ENCODE measurements at regions of chr12 and their contacts with region 1.

Region 1: GRCh38 chr12:109998904-109999857 is at the start of gene ANKRD13A:
- DNase-seq: peak; percentile 94
- H3K4me3 Mint-ChIP-seq: peak within 1 kb of the TSS; percentile 82
- H3K27ac Mint-ChIP-seq: peak within 1 kb of the TSS; percentile 100
- H3K4me1 Mint-ChIP-seq: peaks cover 27% of the 10 kb centered on the region
- H3K27me3 Mint-ChIP-seq: no peaks in the 10 kb centered on the region
- CTCF ChIP-seq: no peak
- total RNA-seq, gene ANKRD13A: 26.1 and 32.5 TPM in 2 replicates

Region 2: DNA sequence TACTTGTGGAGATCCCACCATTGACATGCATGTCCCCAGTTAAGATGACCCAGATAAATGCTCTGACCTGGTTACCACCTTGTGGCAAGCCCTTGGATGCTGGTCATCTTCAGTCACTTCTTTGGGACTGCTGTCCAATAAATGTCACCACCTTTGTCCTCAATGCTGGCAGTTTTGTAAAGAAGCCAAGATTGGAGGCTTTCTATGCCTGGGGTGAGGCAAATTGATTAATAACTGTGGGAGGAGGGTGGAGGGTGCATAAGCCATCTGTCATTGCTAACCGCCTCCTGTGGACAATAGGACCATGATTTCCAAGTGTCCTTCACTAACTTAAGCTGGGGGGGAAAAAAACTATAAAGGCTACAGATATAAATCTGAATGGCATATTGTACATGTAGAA is 24.4 kb after region 1 on chr12:
- CTCF ChIA-PET with region 1: interaction called, 8 read pairs
- POLR2A ChIA-PET with region 1: interaction called, 5 read pairs
- intact Hi-C with region 1: loop called (anchors 2 kb)
- DNase-seq: no peak
- H3K4me3 Mint-ChIP-seq: no peak overlapping the region
- H3K27ac Mint-ChIP-seq: no peak overlapping the region
- H3K4me1 Mint-ChIP-seq: peaks cover 14% of the 10 kb centered on the region
- H3K27me3 Mint-ChIP-seq: no peaks in the 10 kb centered on the region
- CTCF ChIP-seq: no peak

Region 3: GRCh38 chr12:110039085-110039807 is 40.1 kb after region 1 on chr12:
- CTCF ChIA-PET with region 1: interaction called, 3 read pairs
- POLR2A ChIA-PET with region 1: interaction called, 11 read pairs
- intact Hi-C with region 1: loop called (anchors 5 kb)
- DNase-seq: peak; percentile 88
- H3K4me3 Mint-ChIP-seq: peak overlapping the region; percentile 79
- H3K27ac Mint-ChIP-seq: peak overlapping the region; percentile 100
- H3K4me1 Mint-ChIP-seq: peaks cover 18% of the 10 kb centered on the region
- H3K27me3 Mint-ChIP-seq: no peaks in the 10 kb centered on the region
- CTCF ChIP-seq: no peak

Region 4: DNA sequence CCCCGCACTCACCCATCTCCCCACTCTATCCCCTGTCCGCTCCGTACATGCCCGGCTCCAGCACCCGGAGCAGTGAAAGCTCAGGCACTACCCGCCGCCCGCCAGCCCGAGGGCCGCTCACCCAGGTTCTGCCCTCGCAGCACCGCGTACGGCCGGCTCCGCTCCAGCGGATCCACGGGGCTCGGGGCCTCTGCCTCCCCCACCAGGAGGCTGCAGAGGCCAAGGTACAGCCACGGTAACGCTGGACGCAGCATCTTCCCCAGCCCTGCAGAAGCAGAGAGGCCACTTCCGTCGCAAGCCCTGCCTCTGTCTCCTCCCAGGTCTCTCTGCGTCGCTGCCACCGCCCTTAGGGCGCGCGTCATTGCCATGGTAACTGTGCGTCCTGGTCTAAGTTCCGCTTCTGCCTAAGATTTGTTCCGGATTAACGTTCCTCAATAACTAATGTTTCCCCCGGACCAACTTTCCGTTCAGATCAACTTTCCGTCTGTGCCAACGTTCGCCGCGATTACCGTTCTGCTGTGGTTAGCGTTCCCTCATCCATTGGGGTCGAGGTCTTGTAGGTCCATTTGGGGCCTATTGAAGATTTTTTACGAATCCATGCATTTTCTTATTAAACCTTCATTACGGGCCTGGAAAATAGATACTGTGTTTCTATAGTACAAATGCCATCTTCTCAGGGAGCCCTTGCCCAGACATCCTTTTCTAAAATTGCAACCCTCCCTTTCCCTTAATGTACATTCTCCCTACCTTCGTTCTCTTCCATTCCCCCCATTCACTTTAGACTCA is 49.3 kb after region 1 on chr12 and contains the start of gene C12orf76:
- CTCF ChIA-PET with region 1: interaction called, 5 read pairs
- POLR2A ChIA-PET with region 1: interaction called, 15 read pairs
- intact Hi-C with region 1: no loop called
- DNase-seq: peak; percentile 97
- H3K4me3 Mint-ChIP-seq: peak within 1 kb of the TSS; percentile 98
- H3K27ac Mint-ChIP-seq: peak within 1 kb of the TSS; percentile 97
- H3K4me1 Mint-ChIP-seq: peaks cover 20% of the 10 kb centered on the region
- H3K27me3 Mint-ChIP-seq: no peaks in the 10 kb centered on the region
- CTCF ChIP-seq: no peak
- total RNA-seq, gene C12orf76: 7.3 and 13.4 TPM in 2 replicates

Region 5: GRCh38 chr12:110234755-110235154 is 235.6 kb after region 1 on chr12:
- CTCF ChIA-PET with region 1: no interaction called
- POLR2A ChIA-PET with region 1: no interaction called
- intact Hi-C with region 1: no loop called
- DNase-seq: no peak
- H3K4me3 Mint-ChIP-seq: no peak overlapping the region
- H3K27ac Mint-ChIP-seq: peak overlapping the region; percentile 16
- H3K4me1 Mint-ChIP-seq: no peaks in the 10 kb centered on the region
- H3K27me3 Mint-ChIP-seq: no peaks in the 10 kb centered on the region
- CTCF ChIP-seq: no peak